ENCODE measurements at regions of chr3 and their contacts with region 1.

Region 1: DNA sequence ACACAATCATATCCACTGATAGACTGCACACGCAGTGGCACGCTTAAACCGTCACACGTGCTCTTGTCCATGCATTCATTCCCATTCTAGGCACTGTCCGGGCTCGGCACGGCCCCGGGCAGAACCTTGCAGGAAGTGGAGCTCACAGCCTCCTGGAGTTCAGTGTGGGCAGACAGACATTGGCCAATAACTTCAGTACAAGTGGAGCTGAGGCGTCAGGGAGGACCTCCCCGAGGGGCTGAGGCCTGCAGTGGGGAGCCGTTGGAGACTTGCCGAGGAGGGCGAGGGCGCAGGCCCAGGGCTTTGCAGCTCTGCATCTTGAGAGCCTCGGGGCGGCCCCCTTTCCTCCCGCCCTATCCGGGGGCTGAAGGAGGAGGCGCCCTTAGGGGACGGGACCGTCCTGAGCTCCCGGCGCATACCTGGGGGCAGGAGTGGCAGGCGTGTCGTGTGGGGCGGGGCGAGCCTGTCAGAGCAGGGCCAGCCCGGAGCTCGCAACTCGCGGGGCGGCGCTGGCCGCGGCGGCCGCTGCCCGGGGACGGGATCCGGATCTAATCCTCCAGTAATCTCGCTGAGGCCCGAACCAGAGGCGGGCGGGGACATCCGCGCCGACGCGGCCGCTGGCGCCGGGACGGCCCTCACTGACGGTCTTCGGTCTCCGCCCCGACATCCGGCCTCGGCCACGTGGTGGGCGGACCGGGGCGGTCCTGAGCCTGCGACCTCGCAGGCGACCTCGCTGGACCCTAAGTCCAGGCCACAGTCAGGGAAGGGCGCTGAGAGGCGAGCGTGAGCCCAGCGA is at the start of gene ACY1:
- DNase-seq: peak; percentile 45
- H3K4me3 ChIP-seq: peak within 1 kb of the TSS; percentile 54
- H3K27me3 ChIP-seq: no peaks in the 10 kb centered on the region
- CTCF ChIP-seq: no peak
- polyA plus RNA-seq, gene ACY1: 31.7 and 55.7 TPM in 2 replicates

Region 2: DNA sequence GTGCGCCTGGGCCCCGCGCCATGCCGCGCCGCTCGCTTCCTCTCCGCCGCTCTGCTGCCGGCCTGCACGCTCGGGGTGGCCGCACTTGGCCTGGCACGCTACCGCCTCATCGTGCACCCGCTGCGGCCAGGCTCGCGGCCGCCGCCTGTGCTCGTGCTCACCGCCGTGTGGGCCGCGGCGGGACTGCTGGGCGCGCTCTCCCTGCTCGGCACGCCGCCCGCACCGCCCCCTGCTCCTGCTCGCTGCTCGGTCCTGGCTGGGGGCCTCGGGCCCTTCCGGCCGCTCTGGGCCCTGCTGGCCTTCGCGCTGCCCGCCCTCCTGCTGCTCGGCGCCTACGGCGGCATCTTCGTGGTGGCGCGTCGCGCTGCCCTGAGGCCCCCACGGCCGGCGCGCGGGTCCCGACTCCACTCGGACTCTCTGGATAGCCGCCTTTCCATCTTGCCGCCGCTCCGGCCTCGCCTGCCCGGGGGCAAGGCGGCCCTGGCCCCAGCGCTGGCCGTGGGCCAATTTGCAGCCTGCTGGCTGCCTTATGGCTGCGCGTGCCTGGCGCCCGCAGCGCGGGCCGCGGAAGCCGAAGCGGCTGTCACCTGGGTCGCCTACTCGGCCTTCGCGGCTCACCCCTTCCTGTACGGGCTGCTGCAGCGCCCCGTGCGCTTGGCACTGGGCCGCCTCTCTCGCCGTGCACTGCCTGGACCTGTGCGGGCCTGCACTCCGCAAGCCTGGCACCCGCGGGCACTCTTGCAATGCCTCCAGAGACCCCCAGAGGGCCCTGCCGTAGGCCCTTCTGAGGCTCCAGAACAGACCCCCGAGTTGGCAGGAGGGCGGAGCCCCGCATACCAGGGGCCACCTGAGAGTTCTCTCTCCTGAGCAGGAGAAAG is 26.8 kb before region 1 on chr3:
- CTCF ChIA-PET with region 1: no interaction called
- POLR2A ChIA-PET with region 1: no interaction called
- DNase-seq: no peak
- H3K4me3 ChIP-seq: no peak overlapping the region
- H3K27me3 ChIP-seq: no peaks in the 10 kb centered on the region
- CTCF ChIP-seq: peak; percentile 53

Region 3: DNA sequence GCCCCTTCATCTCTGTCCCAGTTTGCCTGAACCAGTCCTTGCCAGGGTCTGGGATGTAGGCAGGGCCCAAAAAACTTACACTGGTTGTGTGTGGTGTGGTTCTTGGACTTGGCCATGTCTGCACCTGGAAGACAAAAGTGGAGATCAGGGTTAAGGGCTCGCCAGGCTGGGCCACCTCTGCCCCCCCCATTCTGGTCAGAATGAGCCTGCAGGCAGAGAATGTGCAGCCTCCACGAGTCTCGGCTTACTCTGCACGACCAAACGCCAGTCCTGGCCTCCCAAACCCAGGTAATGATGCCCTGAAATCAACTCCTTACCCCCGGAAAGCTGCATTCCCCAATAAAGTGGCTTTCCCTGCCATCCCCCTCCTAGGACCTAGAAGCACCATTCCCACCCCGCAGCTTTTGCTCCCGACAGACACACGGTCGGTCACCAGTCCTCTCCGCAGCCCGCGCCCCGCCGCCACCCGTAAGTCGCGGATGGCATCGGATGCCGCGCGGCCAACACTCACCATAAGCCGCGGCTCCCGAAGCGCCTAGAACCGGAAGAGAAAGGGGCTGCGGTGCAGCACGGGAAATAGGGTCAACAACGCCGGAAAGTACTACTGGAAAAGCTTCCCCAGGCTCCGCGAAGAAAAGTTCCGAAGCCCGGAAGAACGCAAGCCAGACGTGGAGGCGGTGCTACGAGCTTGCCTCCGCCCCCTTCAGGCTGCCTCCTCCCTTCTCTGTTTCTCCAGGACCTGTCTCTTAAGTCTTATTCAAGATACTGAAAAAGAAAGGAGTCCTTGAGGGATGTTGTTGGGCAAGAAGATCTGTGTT is 12.6 kb after region 1 on chr3 and contains the start of gene RPL29:
- CTCF ChIA-PET with region 1: interaction called, 10 read pairs
- POLR2A ChIA-PET with region 1: no interaction called
- DNase-seq: peak; percentile 76
- H3K4me3 ChIP-seq: peak within 1 kb of the TSS; percentile 91
- H3K27me3 ChIP-seq: no peaks in the 10 kb centered on the region
- CTCF ChIP-seq: no peak
- polyA plus RNA-seq, gene RPL29: 1,978 and 2,324 TPM in 2 replicates